ENCODE measurements at regions of chr7 and their contacts with region 1.

Region 1: DNA sequence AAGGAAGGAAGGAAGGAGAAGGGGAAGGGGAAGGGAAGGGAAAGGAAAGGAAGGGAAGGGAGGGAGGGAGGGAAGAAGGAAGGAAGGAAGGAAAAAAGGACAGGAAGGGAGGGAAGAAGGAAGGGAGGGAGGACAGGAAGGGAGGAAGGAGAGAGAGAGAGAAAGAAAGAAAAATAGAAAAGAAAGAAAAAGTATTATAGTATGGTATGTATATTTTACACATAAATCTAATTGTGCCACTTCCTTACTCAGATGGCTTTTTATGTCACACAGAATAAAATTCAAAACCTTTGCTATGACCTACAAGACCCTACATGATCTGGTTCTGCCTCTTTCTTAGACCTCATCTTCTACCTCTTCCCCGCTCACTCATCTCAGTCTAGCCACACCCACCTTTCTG is 1016.9 kb upstream of the AUTS2 start:
- DNase-seq: no peak
- H3K4me3 ChIP-seq: no peak overlapping the region
- H3K27ac ChIP-seq: no peak overlapping the region
- H3K4me1 ChIP-seq: no peaks in the 10 kb centered on the region
- H3K27me3 ChIP-seq: no peaks in the 10 kb centered on the region
- CTCF ChIP-seq: no peak
- EP300 ChIP-seq: no peak
- POLR2A ChIP-seq: no peak
- RAD21 ChIP-seq: no peak

Region 2: DNA sequence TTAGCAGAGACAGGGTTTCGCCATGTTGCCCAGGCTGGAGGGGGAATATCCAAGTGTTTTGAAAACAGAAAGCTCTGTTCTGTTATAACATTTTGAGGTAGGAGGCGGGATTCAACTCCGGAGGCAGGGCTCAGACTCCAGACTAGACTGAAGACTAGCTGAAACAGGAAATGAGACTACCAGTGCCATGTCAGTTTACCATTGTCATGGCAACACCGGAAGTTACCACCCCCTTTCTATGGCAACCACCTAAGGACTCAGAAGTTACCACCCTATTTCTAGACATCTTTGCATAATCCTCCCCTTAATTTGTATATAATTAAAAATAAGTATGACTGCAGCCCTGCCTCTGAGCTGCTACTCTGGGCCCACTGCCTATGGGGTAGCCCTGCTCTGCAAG is 52.2 kb before region 1 on chr7:
- CTCF ChIA-PET with region 1: no interaction called
- POLR2A ChIA-PET with region 1: no interaction called
- DNase-seq: no peak
- H3K4me3 ChIP-seq: no peak overlapping the region
- H3K27ac ChIP-seq: no peak overlapping the region
- H3K4me1 ChIP-seq: peaks cover 0 to 5% (median 0%) of the 10 kb centered on the region in 4 experiments; a peak in 1 of 7 replicates
- H3K27me3 ChIP-seq: no peaks in the 10 kb centered on the region
- CTCF ChIP-seq: no peak
- EP300 ChIP-seq: no peak
- POLR2A ChIP-seq: no peak
- RAD21 ChIP-seq: no peak

Region 3: GRCh38 chr7:68604541-68604940 is 23.1 kb after region 1 on chr7:
- CTCF ChIA-PET with region 1: interaction called, 10 read pairs
- POLR2A ChIA-PET with region 1: no interaction called
- DNase-seq: no peak
- H3K4me3 ChIP-seq: no peak overlapping the region
- H3K27ac ChIP-seq: no peak overlapping the region
- H3K4me1 ChIP-seq: no peaks in the 10 kb centered on the region
- H3K27me3 ChIP-seq: no peaks in the 10 kb centered on the region
- CTCF ChIP-seq: no peak
- EP300 ChIP-seq: no peak
- POLR2A ChIP-seq: no peak
- RAD21 ChIP-seq: no peak

Measured in H1 (cell line).